ENCODE measurements at regions of chr1 and their contacts with region 1.

Region 1: GRCh38 chr1:226634166-226634588 is 85.6 kb downstream of the STUM start:
- DNase-seq: peak; percentile 79 to 90 (median 81)
- ATAC-seq: peak; percentile 76 to 82 (median 80)
- H3K4me3 ChIP-seq: no peak overlapping the region
- H3K27ac ChIP-seq: peak overlapping the region in 9 of 12 donors; percentile 1 to 81 (median 39)
- H3K4me1 ChIP-seq: peaks cover 0 to 45% (median 24%) of the 10 kb centered on the region in 12 donors
- H3K27me3 ChIP-seq: no peaks in the 10 kb centered on the region
- CTCF ChIP-seq: peak; percentile 83 to 99 (median 94)
- POLR2A ChIP-seq: no peak

Region 2: DNA sequence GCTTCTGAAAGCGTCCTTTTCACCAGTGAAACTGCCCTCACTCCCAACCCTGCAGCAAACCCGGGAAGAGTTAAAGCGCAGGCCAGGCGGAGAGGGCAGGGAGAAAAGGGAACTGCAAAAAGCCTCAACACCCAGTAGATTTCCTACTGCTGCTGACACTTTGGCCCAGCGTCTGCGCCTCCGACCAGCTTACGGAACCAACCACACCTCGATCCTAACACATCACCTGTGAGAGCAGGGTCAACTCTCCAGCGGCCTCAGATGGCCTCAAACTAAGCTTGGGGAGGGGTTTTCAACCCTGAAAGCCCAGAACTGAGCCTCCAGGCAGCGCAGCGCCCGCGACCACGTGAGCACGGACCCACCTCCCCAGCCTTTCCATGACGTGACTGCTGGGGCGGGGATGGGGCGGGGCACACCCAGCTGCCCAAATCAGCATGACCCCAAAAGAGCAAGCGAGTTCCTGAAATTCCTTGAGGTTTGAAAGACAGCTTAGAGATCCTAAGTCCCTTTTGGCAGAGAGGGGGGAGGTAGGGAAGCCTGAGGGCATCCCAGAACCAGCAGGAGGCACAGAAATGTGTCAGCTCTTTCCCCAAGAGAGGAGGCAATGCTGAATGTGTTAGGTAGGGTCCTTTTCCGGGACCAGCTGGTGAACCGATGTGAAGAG is 45.8 kb after region 1 on chr1:
- intact Hi-C with region 1: loop called in 4 of 10 experiments (anchors 5 to 10 kb)
- DNase-seq: peak; percentile 89 to 91 (median 91)
- ATAC-seq: peak; percentile 73 to 90 (median 88)
- H3K4me3 ChIP-seq: peak overlapping the region in 11 of 12 donors; percentile 8 to 61 (median 47)
- H3K27ac ChIP-seq: peak overlapping the region in 11 of 12 donors; percentile 73 to 97 (median 91)
- H3K4me1 ChIP-seq: peaks cover 25 to 99% (median 86%) of the 10 kb centered on the region in 12 donors
- H3K27me3 ChIP-seq: no peaks in the 10 kb centered on the region
- CTCF ChIP-seq: peak in 2 of 12 donors; percentile 3 to 7
- POLR2A ChIP-seq: peak; percentile 29 to 75

Region 3: DNA sequence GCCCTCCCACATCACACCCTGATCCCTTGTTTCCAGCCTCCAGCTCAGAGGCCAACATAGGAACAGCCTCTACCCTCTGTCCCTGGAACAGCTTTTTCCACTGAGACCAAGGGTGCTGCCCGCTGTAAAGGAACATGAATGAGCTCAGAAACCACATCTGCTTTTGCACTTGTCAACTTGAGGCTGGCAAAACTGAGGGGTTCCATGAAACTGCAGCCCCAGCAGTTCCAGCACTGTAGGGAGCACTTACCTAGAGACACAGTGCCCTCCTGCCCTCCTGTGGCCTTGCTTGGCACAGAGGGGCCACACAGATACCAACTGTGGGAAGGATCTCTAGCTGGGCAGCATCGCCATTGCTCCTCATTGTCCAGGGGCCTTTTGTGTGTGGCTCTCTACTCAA is 53.2 kb after region 1 on chr1:
- intact Hi-C with region 1: loop called in 6 of 10 experiments (anchors 1 to 10 kb)
- DNase-seq: no peak
- ATAC-seq: peak; percentile 27 to 68 (median 55)
- H3K4me3 ChIP-seq: no peak overlapping the region
- H3K27ac ChIP-seq: peak overlapping the region in 10 of 12 donors; percentile 29 to 87 (median 64)
- H3K4me1 ChIP-seq: peaks cover 19 to 99% (median 86%) of the 10 kb centered on the region in 12 donors
- H3K27me3 ChIP-seq: no peaks in the 10 kb centered on the region
- CTCF ChIP-seq: peak in 9 of 12 donors; percentile 16 to 39 (median 28)
- POLR2A ChIP-seq: no peak

Region 4: DNA sequence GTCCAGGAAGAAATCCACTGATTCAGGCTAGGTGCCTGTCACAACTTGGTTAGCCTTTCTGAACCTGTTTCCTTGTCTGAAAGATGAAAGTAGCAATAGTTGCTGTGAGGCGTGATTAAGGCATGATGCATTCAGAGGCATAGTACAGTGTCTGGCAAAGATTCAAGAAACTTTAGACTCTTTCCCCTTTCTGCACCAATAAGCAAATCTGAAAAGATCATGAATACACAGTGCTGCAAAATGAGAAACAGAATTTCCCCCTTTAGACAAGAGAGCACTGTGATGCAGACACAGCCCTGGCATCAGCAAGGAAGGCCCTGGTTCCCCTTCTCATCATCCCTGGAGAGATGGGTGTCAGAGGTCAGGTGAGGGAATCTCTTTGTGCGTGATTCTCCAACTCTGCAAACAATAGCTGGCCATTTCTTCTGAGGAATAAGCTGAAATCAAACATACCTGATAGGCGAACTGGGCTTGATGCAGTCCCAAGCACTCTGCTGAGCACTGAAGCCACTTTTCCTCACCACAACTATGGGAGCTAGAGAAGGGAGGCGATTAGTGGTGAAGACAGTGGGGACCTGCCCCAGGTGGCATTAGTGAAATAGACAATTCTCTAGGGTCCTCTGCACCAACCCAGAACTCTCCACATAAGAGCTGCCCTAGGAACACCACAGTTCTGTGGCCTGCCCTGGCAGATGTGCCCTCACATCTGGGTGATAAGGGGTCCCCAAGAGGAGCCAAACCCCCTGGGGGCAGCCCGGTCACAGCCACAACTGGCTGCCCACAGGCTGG is 63.2 kb after region 1 on chr1:
- intact Hi-C with region 1: loop called in 1 of 10 experiments (anchors 10 kb)
- DNase-seq: no peak
- ATAC-seq: peak in 2 of 4 donors; percentile 10 to 12
- H3K4me3 ChIP-seq: no peak overlapping the region
- H3K27ac ChIP-seq: peak overlapping the region in 6 of 12 donors; percentile 5 to 50 (median 30)
- H3K4me1 ChIP-seq: peaks cover 3 to 71% (median 51%) of the 10 kb centered on the region in 12 donors
- H3K27me3 ChIP-seq: no peaks in the 10 kb centered on the region
- CTCF ChIP-seq: no peak
- POLR2A ChIP-seq: no peak

Region 5: GRCh38 chr1:226754793-226755533 is 120.8 kb after region 1 on chr1:
- intact Hi-C with region 1: no loop called
- DNase-seq: no peak
- ATAC-seq: no peak
- H3K4me3 ChIP-seq: no peak overlapping the region
- H3K27ac ChIP-seq: no peak overlapping the region
- H3K4me1 ChIP-seq: no peaks in the 10 kb centered on the region
- H3K27me3 ChIP-seq: no peaks in the 10 kb centered on the region
- CTCF ChIP-seq: no peak
- POLR2A ChIP-seq: no peak

Region 6: GRCh38 chr1:226827968-226828513 is 193.9 kb after region 1 on chr1:
- intact Hi-C with region 1: loop called (anchors 1 to 5 kb)
- DNase-seq: peak; percentile 94 to 98 (median 97)
- ATAC-seq: peak; percentile 96 to 98 (median 97)
- H3K4me3 ChIP-seq: peak overlapping the region in 8 of 12 donors; percentile 18 to 47 (median 33)
- H3K27ac ChIP-seq: peak overlapping the region; percentile 27 to 93 (median 85)
- H3K4me1 ChIP-seq: peaks cover 0 to 20% (median 14%) of the 10 kb centered on the region in 12 donors
- H3K27me3 ChIP-seq: no peaks in the 10 kb centered on the region
- CTCF ChIP-seq: peak; percentile 92 to 98 (median 96)
- POLR2A ChIP-seq: no peak

Region 7: DNA sequence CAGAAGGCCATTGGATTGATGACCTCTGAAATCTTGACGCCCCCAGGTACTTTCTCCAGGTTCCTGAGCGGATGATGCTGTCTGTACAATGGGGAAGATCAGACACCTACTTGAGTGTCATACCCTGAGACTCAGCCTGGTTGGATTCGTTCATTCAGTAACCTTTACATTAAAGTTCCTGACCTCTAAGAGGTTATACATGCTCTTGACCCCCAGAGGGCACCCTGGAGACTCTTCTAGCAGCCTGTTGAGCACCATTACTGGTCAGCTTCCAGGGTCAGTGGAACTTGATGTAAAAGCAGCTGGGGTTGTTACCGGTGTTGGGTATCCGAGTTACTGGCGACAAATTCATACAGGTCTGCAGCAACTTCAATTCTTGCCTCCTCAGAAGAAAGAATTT is 814.9 kb after region 1 on chr1:
- intact Hi-C with region 1: loop called in 2 of 10 experiments (anchors 5 to 10 kb)
- DNase-seq: no peak
- ATAC-seq: peak in 2 of 4 donors; percentile 14 to 24
- H3K4me3 ChIP-seq: no peak overlapping the region
- H3K27ac ChIP-seq: no peak overlapping the region
- H3K4me1 ChIP-seq: peaks cover 0 to 11% (median 2%) of the 10 kb centered on the region in 12 donors
- H3K27me3 ChIP-seq: peaks cover 0 to 14% (median 0%) of the 10 kb centered on the region in 9 donors
- CTCF ChIP-seq: peak in 11 of 12 donors; percentile 14 to 50 (median 32)
- POLR2A ChIP-seq: no peak

Measured in heart left ventricle (tissue), 16 donors.